AG04449 (cell line): ENCODE measurements at regions of chr19 and their contacts with region 1.

Region 1: GRCh38 chr19:47729992-47730889 is 15.1 kb upstream of the NOP53 start:
- DNase-seq: no peak
- H3K4me3 ChIP-seq: no peak overlapping the region
- CTCF ChIP-seq: no peak

Region 2: DNA sequence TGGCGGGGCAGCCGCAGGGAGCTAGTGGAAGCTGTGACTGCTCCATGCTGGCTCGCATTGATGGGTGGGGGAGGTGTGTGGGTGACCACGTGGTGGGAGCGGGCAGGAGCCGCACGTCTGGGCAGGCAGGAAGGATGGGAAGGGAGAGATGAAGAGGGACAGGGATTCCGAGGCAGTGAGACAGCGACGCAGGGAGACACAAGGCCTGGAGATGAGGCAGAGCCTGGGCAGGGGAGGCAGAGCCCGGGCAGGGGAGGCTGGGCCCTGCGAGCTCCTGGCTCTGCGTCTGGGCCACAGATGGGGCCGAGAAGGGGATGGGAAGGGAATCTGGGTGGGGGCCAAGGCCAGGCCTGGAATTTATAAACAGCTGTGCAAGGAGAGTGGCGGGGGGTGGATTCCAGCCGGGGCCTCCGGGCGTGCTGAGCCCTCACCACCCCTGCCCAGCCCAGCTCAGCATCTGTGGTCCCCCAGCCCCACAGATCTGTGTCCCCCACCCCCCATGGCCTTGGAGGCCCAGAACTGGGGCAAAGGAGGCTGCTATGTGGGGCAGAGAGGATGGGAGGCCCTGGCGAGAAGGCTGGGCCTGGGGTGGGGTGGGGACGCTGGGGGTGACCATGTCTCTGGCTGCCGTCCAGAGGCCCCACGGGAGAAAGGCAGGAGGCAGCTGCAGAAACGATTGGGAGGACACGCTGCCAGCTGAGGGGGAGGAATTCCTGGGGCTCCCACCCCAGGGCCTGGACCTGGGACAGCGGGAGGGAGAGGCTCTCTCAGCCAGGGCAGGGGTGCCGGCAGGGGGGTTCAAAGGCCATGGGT is 11.0 kb before region 1 on chr19:
- CTCF ChIA-PET with region 1: interaction called, 17 read pairs
- POLR2A ChIA-PET with region 1: interaction called, 17 read pairs
- DNase-seq: peak; percentile 98
- H3K4me3 ChIP-seq: peak overlapping the region; percentile 46
- CTCF ChIP-seq: no peak